CD14-positive monocyte (primary cell): ENCODE measurements at regions of chr20 and their contacts with region 1.

Region 1: DNA sequence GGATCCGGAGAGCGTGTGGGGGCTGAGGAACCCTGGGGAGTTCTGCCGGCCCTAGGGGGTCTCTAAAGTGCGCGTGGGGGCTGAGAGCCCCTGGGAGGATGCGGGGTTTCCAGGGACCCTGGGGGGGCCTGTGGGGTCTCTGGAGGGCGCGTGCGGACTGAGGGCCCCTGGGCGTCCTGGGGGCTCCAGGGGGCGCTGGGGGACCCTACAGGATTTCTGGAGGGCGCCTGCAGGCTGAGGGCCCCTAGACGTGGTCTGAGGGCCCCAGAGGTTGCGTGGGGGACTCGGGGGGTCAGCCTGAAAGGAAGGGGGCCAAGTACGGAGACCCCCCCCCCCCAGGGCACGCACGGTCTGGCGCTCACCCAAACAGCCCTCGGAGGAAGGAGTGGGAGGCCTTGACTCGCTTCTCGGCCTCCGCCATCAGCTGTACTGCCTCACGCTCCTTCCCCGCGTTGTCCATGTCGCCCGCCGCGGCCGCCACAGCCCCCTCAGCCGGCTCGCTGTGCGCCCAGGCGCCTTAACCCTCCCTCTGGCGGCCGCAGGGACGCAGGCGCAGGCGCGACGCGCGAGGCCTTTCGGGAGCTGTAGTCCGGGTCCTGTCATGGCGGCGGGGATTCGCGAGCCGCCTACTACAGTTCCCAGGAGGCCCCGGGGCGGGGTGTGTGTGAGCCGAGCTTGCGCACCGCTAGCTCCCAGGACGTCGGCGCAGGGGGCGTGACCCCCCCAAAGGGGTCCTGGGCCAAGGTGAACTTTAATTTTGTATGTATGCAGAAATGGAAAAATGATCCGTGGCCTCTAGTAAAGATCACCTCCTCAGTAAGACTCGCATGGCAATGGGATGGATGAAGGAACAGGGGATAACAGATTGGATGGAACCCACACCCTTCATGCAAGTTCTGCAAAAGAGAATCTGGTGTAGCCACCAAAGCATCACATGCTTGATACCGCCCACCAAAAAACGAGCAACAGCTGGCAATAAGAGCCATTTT is at the start of gene NAPB:
- DNase-seq: peak; percentile 81 to 90 (median 85)
- H3K4me3 ChIP-seq: peak within 1 kb of the TSS; percentile 87 to 99 (median 94)
- H3K4me3 Mint-ChIP-seq: peak within 1 kb of the TSS; percentile 81 to 91
- H3K27ac ChIP-seq: peak within 1 kb of the TSS; percentile 75 to 84
- H3K27ac Mint-ChIP-seq: peak within 1 kb of the TSS; percentile 62 to 93 (median 86)
- H3K4me1 ChIP-seq: peaks cover 12% of the 10 kb centered on the region in 2 donors
- H3K4me1 Mint-ChIP-seq: peaks cover 22% of the 10 kb centered on the region
- H3K27me3 ChIP-seq: no peaks in the 10 kb centered on the region
- H3K27me3 Mint-ChIP-seq: no peaks in the 10 kb centered on the region
- CTCF ChIP-seq: peak; percentile 58
- polyA plus RNA-seq, gene NAPB: 2.4 to 6.3 (median 2.6) TPM

Region 2: GRCh38 chr20:23357767-23358591 is 63.3 kb before region 1 on chr20:
- intact Hi-C with region 1: loop called (anchors 5 kb)
- DNase-seq: peak; percentile 100
- H3K4me3 ChIP-seq: peak overlapping the region; percentile 45 to 84 (median 70)
- H3K4me3 Mint-ChIP-seq: peak overlapping the region; percentile 76 to 87
- H3K27ac ChIP-seq: peak overlapping the region; percentile 92 to 95
- H3K27ac Mint-ChIP-seq: peak overlapping the region; percentile 93 to 98 (median 94)
- H3K4me1 ChIP-seq: peaks cover 29 to 38% of the 10 kb centered on the region in 2 donors
- H3K4me1 Mint-ChIP-seq: peaks cover 33% of the 10 kb centered on the region
- H3K27me3 ChIP-seq: no peaks in the 10 kb centered on the region
- H3K27me3 Mint-ChIP-seq: peaks cover 0 to 3% (median 0%) of the 10 kb centered on the region in 3 donors
- CTCF ChIP-seq: no peak

Region 3: DNA sequence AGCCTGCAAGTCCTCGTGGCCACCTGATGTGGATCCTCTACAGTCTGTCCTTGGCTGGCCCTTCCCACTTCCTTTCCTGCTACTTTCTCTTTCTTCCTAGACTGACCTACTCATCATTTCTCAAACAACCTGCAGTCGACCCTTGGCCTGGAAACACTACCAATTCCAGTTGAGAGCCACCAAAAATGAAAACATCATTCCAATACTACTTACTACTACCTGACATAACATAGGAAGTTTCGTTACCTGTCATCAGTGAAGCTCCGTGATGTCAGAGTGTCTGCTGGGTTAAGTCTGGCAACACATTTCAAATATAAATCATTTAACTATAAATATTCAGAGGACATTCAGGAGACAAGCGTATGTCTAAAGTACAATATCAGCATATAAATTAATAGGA is 45.4 kb before region 1 on chr20:
- intact Hi-C with region 1: loop called in 1 of 2 experiments (anchors 5 kb)
- DNase-seq: no peak
- H3K4me3 ChIP-seq: no peak overlapping the region
- H3K4me3 Mint-ChIP-seq: no peak overlapping the region
- H3K27ac ChIP-seq: no peak overlapping the region
- H3K27ac Mint-ChIP-seq: peak overlapping the region in 1 of 7 donors; percentile 11
- H3K4me1 ChIP-seq: peaks cover 11 to 14% of the 10 kb centered on the region in 2 donors
- H3K4me1 Mint-ChIP-seq: peaks cover 14% of the 10 kb centered on the region
- H3K27me3 ChIP-seq: no peaks in the 10 kb centered on the region
- H3K27me3 Mint-ChIP-seq: no peaks in the 10 kb centered on the region
- CTCF ChIP-seq: no peak